Activated CD4-positive, alpha-beta T cell treated with anti-CD3 and anti-CD28 coated beads, Interleukin-2, amount 10 ng/mL, durations not matched to agents 24 days and 14 days (primary cell): ENCODE measurements at regions of chr6 and their contacts with region 1.

Region 1: DNA sequence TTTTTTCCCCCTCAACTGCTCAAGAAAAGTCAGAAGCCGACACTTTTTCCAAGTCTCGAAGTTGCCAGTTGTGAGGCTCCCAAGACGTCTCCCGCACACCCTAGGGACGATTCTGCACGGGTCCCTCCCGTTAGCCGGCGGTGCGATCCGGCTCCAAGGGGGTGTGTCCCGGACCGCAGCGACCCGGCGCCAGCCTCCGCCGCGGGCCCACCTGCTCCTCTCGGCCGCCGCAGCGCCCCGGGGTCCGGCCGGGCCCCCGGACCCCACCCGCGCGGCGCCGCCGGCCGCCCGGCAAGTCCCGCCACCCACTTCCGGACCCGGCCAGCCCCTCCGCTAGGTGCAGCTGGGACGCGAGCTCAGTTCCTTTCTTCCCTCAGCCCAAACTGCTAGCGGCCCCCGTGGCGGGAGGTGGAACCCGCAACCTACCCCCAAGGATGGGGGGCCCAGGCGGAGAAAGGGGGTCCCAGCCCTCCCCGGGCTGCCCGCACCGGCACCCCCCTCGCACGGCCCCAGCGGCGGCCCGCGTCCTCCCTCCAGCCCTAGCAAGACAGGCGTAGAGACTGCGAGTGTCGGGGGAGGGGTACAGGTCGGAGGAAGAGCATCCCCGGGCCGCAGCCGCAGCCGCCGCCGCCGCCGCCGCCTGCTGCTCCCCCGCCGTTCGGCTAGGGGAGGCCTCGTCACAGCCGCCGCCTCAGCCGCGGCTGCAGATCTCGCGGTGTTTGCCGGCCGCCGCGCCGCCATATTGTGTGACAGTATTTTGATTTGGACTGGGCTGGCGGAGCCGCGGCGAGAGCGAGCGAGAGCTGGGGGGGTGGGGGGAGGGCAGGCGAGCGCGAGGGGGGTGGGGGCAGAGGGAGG is 485 bp upstream of the TAB2 start:
- DNase-seq: peak; percentile 97
- H3K4me3 Mint-ChIP-seq: peak overlapping the region; percentile 91
- H3K27ac Mint-ChIP-seq: peak overlapping the region; percentile 92
- H3K4me1 Mint-ChIP-seq: peaks cover 35% of the 10 kb centered on the region
- H3K27me3 Mint-ChIP-seq: no peaks in the 10 kb centered on the region

Region 2: GRCh38 chr6:149075616-149076364 is 241.2 kb before region 1 on chr6:
- intact Hi-C with region 1: loop called (anchors 2 kb)
- DNase-seq: peak; percentile 68
- H3K4me3 Mint-ChIP-seq: peak overlapping the region; percentile 10
- H3K27ac Mint-ChIP-seq: peak overlapping the region; percentile 87
- H3K4me1 Mint-ChIP-seq: peaks cover 45% of the 10 kb centered on the region
- H3K27me3 Mint-ChIP-seq: no peaks in the 10 kb centered on the region

Region 3: DNA sequence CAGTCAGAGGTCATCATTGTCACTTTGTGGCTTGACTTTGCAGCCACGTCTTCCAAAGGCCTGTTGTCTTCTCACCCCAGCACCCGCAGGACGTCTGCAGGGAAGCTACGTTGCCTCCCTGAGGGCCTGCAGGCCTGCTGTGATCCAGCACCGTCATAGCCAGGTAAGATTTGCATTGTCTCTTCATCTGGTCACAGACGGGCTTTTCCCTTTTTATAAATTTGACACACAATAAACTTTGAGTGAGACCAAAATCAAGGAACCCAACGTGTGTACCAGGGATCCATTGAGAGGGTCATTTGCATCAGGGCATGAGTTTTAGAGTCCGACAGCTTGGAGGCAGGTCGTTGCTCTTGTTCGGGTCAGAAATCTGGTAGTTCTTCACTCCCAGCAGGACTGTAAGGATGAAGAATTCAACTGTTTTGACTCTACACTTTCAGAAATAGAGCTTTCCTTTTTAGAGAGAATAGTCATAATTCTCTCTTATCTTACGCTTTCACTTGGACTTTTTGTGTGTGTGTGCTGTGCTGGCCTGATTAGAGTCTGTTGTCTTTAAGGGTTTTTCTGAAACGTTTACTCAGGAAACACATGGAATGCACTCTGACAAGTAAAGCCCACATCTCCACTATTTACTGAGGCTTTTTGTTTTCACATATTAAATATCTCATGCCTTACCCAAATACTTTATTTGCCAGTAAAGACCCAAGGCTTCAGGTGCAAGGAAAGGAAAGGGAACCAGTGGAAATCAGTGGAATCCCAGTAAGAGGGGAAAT is 176.7 kb before region 1 on chr6:
- intact Hi-C with region 1: loop called (anchors 1 kb)
- DNase-seq: peak; percentile 87
- H3K4me3 Mint-ChIP-seq: peak overlapping the region; percentile 85
- H3K27ac Mint-ChIP-seq: peak overlapping the region; percentile 100
- H3K4me1 Mint-ChIP-seq: peaks cover 48% of the 10 kb centered on the region
- H3K27me3 Mint-ChIP-seq: no peaks in the 10 kb centered on the region

Region 4: DNA sequence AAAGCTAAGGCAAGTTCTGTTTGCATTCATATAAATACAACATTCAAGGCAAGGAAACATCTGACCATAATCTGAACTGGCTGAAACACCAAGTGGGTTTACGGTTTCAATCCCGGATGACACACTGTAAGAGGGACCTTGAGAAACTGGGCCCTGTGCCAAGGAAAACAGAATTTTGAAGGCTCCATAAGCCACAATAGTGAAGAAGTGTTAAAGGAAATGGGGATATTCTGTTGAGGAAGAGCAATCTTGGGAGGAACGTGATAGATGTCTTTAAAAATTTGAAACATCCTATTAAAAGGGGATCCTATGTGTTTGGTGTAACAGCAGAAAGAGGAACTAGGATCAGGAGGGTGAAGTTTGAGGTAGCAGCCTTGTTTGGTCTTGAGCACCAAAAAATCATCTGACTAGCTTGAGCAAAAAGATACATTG is 81.9 kb before region 1 on chr6:
- intact Hi-C with region 1: loop called (anchors 1 kb)
- DNase-seq: no peak
- H3K4me3 Mint-ChIP-seq: peak overlapping the region; percentile 74
- H3K27ac Mint-ChIP-seq: peak overlapping the region; percentile 98
- H3K4me1 Mint-ChIP-seq: peaks cover 53% of the 10 kb centered on the region
- H3K27me3 Mint-ChIP-seq: no peaks in the 10 kb centered on the region

Region 5: DNA sequence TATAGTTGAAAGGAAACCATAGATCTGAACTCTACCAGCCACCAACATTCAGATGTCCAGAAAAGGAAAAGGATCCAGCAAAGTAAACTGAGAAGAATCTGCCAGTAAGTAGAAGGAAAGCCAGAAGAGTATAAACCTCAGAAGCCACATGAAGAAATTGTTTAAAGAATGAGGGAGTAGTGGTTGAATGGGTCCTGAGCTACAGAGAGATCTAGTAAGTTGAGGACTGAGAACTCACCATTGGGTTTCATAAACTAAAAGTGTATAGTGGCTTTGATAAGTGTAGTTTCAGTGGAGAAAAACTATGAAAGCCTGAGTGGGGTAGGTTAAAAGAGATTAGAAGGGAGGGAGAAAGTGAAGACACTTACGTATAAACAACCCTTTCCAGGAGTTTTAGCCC is 51.0 kb after region 1 on chr6:
- intact Hi-C with region 1: loop called (anchors 2 kb)
- DNase-seq: no peak
- H3K4me3 Mint-ChIP-seq: no peak overlapping the region
- H3K27ac Mint-ChIP-seq: no peak overlapping the region
- H3K4me1 Mint-ChIP-seq: peaks cover 42% of the 10 kb centered on the region
- H3K27me3 Mint-ChIP-seq: no peaks in the 10 kb centered on the region

Region 6: GRCh38 chr6:149513915-149514314 is 196.9 kb after region 1 on chr6:
- intact Hi-C with region 1: loop called (anchors 5 kb)
- DNase-seq: peak; percentile 49
- H3K4me3 Mint-ChIP-seq: no peak overlapping the region
- H3K27ac Mint-ChIP-seq: peak overlapping the region; percentile 67
- H3K4me1 Mint-ChIP-seq: peaks cover 44% of the 10 kb centered on the region
- H3K27me3 Mint-ChIP-seq: no peaks in the 10 kb centered on the region